B cell (primary cell): ENCODE measurements at regions of chr6 and their contacts with region 1.

Region 1: GRCh38 chr6:134123666-134124208 is 71.3 kb upstream of the SLC2A12 start:
- DNase-seq: peak; percentile 63
- ATAC-seq: peak; percentile 58
- H3K4me3 ChIP-seq: no peak overlapping the region
- H3K4me3 Mint-ChIP-seq: no peak overlapping the region
- H3K27ac ChIP-seq: no peak overlapping the region
- H3K27ac Mint-ChIP-seq: no peak overlapping the region
- H3K4me1 ChIP-seq: no peaks in the 10 kb centered on the region
- H3K4me1 Mint-ChIP-seq: no peaks in the 10 kb centered on the region
- H3K27me3 ChIP-seq: no peaks in the 10 kb centered on the region
- H3K27me3 Mint-ChIP-seq: no peaks in the 10 kb centered on the region
- CTCF ChIP-seq: peak; percentile 90

Region 2: DNA sequence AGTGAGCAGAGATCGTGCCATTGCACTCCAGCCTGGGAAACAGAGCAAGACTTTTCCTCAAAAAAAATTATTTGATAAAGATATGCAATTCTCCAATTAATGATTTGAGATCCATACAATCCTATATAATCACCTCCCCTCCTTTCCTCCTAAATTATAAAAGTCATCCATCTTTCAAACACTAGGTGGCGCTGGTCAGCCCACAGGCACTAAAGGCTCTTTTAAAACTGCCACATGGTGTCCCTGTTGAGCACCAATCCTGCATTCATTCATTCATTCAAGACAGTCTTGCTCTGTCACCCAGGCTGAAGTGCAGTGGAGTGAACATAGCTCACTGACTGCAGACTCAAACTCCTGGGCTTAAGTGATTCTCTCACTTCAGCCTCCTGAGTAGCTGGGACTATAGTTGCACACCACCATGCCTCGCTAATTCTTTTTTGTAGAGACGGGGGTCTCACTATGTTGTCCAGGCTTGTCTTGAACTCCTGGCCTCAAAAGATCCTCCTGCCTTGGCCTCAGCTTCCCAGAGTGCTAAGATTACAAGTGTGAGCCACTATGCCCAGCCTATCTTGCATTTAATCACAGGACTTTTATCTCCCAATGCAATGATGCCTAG is 12.6 kb before region 1 on chr6:
- CTCF ChIA-PET with region 1: interaction called, 48 read pairs
- POLR2A ChIA-PET with region 1: no interaction called
- intact Hi-C with region 1: no loop called
- DNase-seq: peak; percentile 69
- ATAC-seq: peak; percentile 53
- H3K4me3 ChIP-seq: no peak overlapping the region
- H3K4me3 Mint-ChIP-seq: no peak overlapping the region
- H3K27ac ChIP-seq: no peak overlapping the region
- H3K27ac Mint-ChIP-seq: no peak overlapping the region
- H3K4me1 ChIP-seq: no peaks in the 10 kb centered on the region
- H3K4me1 Mint-ChIP-seq: no peaks in the 10 kb centered on the region
- H3K27me3 ChIP-seq: peaks cover 0 to 11% (median 0%) of the 10 kb centered on the region in 4 experiments
- H3K27me3 Mint-ChIP-seq: peaks cover 19% of the 10 kb centered on the region
- CTCF ChIP-seq: peak; percentile 88

Region 3: DNA sequence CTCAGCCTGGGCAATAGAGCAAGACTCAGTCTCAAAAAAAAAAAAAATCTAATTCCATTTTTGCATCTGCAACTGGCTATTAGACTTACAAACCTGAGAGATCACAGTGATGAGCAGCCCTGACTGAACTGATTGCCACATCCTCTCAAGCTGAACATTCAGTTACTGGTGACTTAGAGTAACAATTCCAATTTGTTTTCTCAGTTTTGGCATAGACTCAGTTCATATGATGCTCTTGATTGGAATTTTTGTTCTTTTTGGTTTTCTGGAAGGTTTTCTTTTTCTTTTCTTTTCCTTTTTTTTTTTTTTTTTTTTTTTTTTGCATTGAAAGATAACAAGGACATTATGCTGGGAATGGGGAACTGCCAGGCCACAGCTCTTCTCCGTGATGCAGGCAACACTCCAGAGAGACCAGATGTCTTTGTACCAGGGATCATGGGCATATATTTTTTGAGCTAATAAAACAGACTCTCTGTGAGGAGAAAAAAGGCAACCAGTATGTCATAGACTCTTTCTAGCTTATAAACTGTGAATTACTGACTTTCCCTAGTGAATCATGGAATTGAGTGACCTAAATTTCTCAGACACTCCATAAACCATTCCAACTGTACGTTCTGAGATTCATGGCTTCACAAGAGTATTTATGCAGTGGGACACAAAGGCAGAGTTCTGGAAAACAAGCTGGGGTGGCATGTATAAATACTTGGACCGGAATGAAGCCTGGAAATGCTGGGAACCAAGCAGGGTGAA is 14.7 kb after region 1 on chr6:
- CTCF ChIA-PET with region 1: interaction called, 16 read pairs
- POLR2A ChIA-PET with region 1: no interaction called
- intact Hi-C with region 1: no loop called
- DNase-seq: no peak
- ATAC-seq: no peak
- H3K4me3 ChIP-seq: no peak overlapping the region
- H3K4me3 Mint-ChIP-seq: no peak overlapping the region
- H3K27ac ChIP-seq: no peak overlapping the region
- H3K27ac Mint-ChIP-seq: no peak overlapping the region
- H3K4me1 ChIP-seq: no peaks in the 10 kb centered on the region
- H3K4me1 Mint-ChIP-seq: no peaks in the 10 kb centered on the region
- H3K27me3 ChIP-seq: no peaks in the 10 kb centered on the region
- H3K27me3 Mint-ChIP-seq: peaks cover 15% of the 10 kb centered on the region
- CTCF ChIP-seq: no peak

Region 4: GRCh38 chr6:134145786-134146185 is 22.0 kb after region 1 on chr6:
- CTCF ChIA-PET with region 1: interaction called, 16 read pairs
- POLR2A ChIA-PET with region 1: no interaction called
- intact Hi-C with region 1: no loop called
- DNase-seq: peak; percentile 29
- ATAC-seq: peak; percentile 51
- H3K4me3 ChIP-seq: no peak overlapping the region
- H3K4me3 Mint-ChIP-seq: no peak overlapping the region
- H3K27ac ChIP-seq: no peak overlapping the region
- H3K27ac Mint-ChIP-seq: no peak overlapping the region
- H3K4me1 ChIP-seq: no peaks in the 10 kb centered on the region
- H3K4me1 Mint-ChIP-seq: peaks cover 2% of the 10 kb centered on the region
- H3K27me3 ChIP-seq: no peaks in the 10 kb centered on the region
- H3K27me3 Mint-ChIP-seq: no peaks in the 10 kb centered on the region
- CTCF ChIP-seq: no peak

Region 5: DNA sequence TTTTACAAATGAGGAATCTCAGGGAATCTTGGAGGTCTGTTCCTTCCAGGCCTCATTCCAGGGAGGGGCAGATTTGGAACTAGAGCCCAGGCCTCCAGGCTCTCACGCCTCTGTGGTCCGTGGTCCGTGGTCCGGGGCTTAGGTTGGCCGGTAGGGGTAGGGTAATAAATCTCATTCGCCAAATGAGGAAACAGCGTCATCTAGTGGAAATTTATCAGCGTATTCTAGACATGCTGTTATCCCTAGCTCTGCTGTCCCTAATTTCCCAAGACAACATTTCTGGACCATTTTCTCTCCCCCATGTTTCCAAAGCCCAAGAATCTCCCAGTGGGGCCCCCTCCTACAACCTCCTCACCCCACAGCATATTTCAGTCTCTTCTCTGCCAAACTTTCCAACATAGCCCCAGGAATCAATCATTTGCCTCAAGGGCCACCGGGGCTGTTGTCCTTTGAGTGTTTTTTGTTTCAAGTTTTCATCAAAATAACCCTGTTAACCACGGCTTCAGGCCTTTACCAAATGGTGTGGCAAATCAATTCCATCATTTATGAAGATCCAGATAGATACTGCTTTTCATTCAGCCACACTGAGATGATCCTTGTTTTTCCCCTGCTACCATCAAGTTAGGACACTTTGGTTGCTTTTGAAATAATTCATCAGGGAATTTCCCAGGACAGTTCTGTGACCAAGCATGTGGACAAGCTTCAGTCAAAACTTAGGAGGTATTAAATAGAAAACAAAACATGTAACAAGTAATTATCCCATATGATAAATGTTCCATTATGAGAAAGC is 699.4 kb after region 1 on chr6:
- CTCF ChIA-PET with region 1: interaction called, 5 read pairs
- POLR2A ChIA-PET with region 1: no interaction called
- intact Hi-C with region 1: loop called (anchors 1 kb)
- DNase-seq: peak; percentile 72
- ATAC-seq: peak; percentile 74
- H3K4me3 ChIP-seq: no peak overlapping the region
- H3K4me3 Mint-ChIP-seq: no peak overlapping the region
- H3K27ac ChIP-seq: no peak overlapping the region
- H3K27ac Mint-ChIP-seq: no peak overlapping the region
- H3K4me1 ChIP-seq: no peaks in the 10 kb centered on the region
- H3K4me1 Mint-ChIP-seq: peaks cover 9% of the 10 kb centered on the region
- H3K27me3 ChIP-seq: no peaks in the 10 kb centered on the region
- H3K27me3 Mint-ChIP-seq: peaks cover 3% of the 10 kb centered on the region
- CTCF ChIP-seq: peak; percentile 77

Region 6: GRCh38 chr6:134882426-134883038 is 758.8 kb after region 1 on chr6:
- CTCF ChIA-PET with region 1: interaction called, 34 read pairs
- POLR2A ChIA-PET with region 1: no interaction called
- intact Hi-C with region 1: loop called (anchors 1 kb)
- DNase-seq: peak; percentile 65
- ATAC-seq: peak; percentile 54
- H3K4me3 ChIP-seq: no peak overlapping the region
- H3K4me3 Mint-ChIP-seq: no peak overlapping the region
- H3K27ac ChIP-seq: no peak overlapping the region
- H3K27ac Mint-ChIP-seq: no peak overlapping the region
- H3K4me1 ChIP-seq: peaks cover 0 to 3% of the 10 kb centered on the region in 2 donors
- H3K4me1 Mint-ChIP-seq: no peaks in the 10 kb centered on the region
- H3K27me3 ChIP-seq: peaks cover 0 to 5% (median 2%) of the 10 kb centered on the region in 4 experiments
- H3K27me3 Mint-ChIP-seq: peaks cover 21% of the 10 kb centered on the region
- CTCF ChIP-seq: peak; percentile 87